ENCODE measurements at regions of chr1 and their contacts with region 1.

Region 1: DNA sequence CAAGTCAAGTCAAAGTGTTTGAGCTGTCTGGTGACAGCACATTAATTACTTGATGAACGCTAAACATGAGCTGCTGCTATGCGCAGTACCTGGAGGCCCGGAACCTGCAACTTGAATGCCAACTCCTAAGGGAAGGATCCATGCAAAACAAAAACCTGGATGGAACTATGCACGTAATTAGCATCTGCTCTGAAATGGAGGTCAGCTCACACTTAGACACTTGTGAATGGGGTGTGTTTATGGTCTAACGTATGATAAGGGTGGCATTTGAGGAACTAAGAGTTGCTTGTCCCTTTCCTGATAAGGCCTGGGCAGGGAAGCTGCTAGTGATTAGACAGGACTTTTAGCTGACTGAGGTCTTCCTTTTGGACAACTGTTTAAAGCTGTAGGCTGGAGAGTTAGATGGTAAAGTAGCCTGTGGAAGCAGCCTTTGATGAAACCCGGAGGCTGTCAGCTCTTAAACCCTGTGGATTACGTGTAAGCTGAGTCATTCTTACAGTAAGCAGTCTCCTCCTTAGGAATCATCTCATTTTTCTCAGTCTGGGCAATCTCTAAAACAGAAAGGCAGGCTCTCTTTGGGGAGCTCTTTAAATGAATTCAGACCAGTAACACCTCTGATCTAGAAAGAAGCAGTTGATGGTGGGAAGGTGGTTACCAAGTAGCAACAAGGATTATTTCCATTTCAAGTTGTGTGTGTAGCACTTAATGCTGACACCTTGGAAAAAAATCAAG is 6.8 kb downstream of the TENT5C start:
- DNase-seq: no peak
- H3K4me3 ChIP-seq: no peak overlapping the region
- H3K27ac ChIP-seq: peak overlapping the region in 3 of 4 donors; percentile 60 to 86 (median 75)
- H3K4me1 ChIP-seq: peaks cover 0 to 61% (median 42%) of the 10 kb centered on the region in 4 donors
- H3K27me3 ChIP-seq: no peaks in the 10 kb centered on the region
- CTCF ChIP-seq: no peak
- EP300 ChIP-seq: peak in 1 of 4 donors; percentile 60
- POLR2A ChIP-seq: no peak

Region 2: GRCh38 chr1:117427297-117427696 is 185.4 kb before region 1 on chr1:
- intact Hi-C with region 1: no loop called
- DNase-seq: no peak
- H3K4me3 ChIP-seq: no peak overlapping the region
- H3K27ac ChIP-seq: no peak overlapping the region
- H3K4me1 ChIP-seq: no peaks in the 10 kb centered on the region
- H3K27me3 ChIP-seq: no peaks in the 10 kb centered on the region
- CTCF ChIP-seq: no peak
- EP300 ChIP-seq: no peak
- POLR2A ChIP-seq: no peak

Region 3: DNA sequence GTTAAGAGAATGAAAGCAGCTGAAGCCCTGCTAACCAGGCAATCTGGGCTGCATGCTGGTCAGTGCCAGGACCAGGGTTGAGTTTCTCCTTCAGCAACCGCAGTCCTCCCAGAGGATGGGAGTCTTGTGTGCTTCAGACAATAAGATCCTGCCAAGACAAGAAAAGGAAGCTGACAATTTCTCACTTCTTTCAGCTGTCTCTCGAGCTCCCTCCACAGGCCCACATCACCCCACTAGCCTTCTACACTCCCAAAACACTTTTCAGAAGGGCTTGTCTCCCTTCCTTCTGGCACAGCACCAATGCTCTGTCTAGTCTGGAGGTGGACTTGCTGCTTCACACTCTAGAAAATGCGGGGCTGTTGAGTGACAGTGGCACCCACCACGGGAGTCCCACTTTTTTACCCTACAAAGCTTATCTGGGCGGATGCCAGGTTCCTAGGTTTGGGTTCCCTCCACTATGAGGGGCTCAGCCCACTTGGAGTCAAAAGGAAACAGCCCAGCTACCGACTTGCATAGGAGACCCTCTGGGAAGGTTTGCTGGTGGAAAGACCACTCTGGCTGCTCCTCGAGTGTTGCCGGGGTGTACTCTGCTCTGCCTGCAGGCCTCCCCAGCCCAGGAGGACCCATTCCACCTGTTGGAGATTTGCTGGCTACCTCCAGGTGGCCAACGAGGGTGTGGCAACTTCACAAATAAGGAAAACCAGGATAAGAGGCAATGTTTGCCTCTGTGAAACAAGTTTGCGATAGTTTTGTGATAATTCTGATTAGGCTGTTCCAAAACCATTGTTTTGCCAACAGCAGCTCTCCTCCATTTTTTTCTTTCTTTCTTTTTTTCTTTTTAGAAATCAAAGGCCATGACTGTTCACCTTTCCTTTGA is 62.1 kb after region 1 on chr1:
- intact Hi-C with region 1: loop called (anchors 5 kb)
- DNase-seq: no peak
- H3K4me3 ChIP-seq: no peak overlapping the region
- H3K27ac ChIP-seq: no peak overlapping the region
- H3K4me1 ChIP-seq: peaks cover 2 to 28% (median 24%) of the 10 kb centered on the region in 4 donors
- H3K27me3 ChIP-seq: no peaks in the 10 kb centered on the region
- CTCF ChIP-seq: no peak
- EP300 ChIP-seq: no peak
- POLR2A ChIP-seq: no peak

Region 4: GRCh38 chr1:117695796-117696490 is 83.3 kb after region 1 on chr1:
- intact Hi-C with region 1: loop called (anchors 5 kb)
- DNase-seq: peak; percentile 76
- H3K4me3 ChIP-seq: peak overlapping the region in 2 of 4 donors; percentile 28 to 30
- H3K27ac ChIP-seq: peak overlapping the region; percentile 81 to 88 (median 84)
- H3K4me1 ChIP-seq: peaks cover 0 to 55% (median 50%) of the 10 kb centered on the region in 4 donors
- H3K27me3 ChIP-seq: no peaks in the 10 kb centered on the region
- CTCF ChIP-seq: no peak
- EP300 ChIP-seq: peak in 2 of 4 donors; percentile 68 to 70
- POLR2A ChIP-seq: no peak

Measured in sigmoid colon (tissue), 7 donors.